Prostate gland (tissue), 2 donors: ENCODE measurements at regions of chr1 and their contacts with region 1.

Region 1: DNA sequence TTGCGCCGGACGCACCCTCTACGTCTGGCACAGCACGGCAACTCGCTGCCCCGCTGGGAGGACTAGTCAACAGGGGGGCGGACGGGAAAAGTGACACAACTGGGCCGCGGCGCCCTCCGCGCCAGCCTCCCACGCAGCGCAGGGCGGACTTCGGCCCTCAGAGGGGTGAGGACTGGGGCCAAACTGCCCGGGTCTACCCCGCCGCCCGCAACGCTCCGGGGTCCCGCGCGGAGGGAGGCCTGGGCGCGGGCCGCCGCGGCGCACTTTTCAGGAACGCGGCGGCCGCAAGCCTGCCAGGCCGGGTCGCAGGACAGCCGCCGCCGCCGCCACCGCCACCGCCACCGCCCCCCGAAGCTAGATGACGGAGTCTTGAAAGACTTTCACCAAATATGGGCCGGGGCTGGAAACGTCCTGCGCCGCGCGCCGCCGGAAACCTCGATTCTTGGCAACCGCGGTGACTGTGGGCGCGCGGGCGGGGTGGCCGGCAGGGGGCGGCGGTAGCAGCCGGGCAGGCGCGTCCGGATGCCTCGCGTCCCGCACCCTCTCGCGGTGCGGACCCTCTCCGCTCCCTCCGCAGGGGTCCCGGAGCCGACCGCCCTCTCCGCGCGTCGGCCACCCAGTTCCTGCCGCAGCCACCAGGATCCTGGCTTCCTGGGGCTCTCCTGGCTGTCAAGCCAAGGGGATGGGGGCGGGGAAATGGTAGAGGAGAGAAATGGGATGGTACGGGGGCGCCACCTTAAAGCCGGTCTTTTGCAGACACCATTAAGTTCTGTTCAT is 3.7 kb upstream of the CCN1 start:
- DNase-seq: peak; percentile 76
- H3K4me3 ChIP-seq: peak overlapping the region; percentile 65 to 78
- H3K27ac ChIP-seq: peak overlapping the region; percentile 96 to 98
- H3K4me1 ChIP-seq: no peaks in the 10 kb centered on the region
- H3K27me3 ChIP-seq: no peaks in the 10 kb centered on the region
- CTCF ChIP-seq: peak; percentile 71 to 92 (median 84)
- POLR2A ChIP-seq: no peak

Region 2: GRCh38 chr1:85692730-85693314 is 116.0 kb after region 1 on chr1:
- intact Hi-C with region 1: loop called (anchors 5 kb)
- DNase-seq: no peak
- H3K4me3 ChIP-seq: no peak overlapping the region
- H3K27ac ChIP-seq: no peak overlapping the region
- H3K4me1 ChIP-seq: no peaks in the 10 kb centered on the region
- H3K27me3 ChIP-seq: no peaks in the 10 kb centered on the region
- CTCF ChIP-seq: peak in 3 of 4 experiments; percentile 34 to 63 (median 52)
- POLR2A ChIP-seq: no peak